PC-3 (cell line): ENCODE measurements at regions of chr2 and their contacts with region 1.

Region 1: DNA sequence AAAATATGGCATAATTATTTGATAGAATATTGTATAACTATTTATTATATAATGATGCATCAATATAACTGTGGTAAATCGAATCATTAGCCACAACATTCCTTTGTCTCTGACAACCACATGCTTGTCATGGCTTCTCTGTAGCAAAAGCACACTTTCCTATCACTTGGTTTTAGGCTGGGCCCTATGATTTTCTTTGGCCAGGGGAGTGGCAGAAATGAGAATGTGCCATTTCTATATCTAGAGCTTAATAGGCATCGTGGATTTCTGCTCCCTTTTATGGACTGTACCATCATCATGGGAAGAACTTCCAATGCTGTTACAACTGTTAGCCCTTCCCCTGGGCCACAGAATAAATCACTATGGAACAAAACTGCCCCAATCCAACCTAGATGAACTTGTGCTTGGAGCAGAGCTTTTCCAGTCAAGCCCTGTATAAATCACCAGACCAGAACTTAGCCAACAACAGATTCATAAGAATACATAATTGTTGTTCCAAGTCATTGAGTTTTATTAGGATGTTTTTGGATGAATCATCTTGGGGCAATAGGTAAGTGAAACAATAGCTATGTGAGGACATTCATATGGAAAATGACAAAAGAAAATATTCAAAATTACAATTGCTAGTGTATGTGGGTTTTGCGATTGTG is 715.8 kb downstream of the ERBB4 start:
- DNase-seq: peak; percentile 76
- ATAC-seq: peak; percentile 93
- H3K4me3 ChIP-seq: no peak overlapping the region
- H3K27ac ChIP-seq: peak overlapping the region; percentile 49
- H3K4me1 ChIP-seq: peaks cover 6% of the 10 kb centered on the region; the same call in 1 of the 2 replicates
- H3K27me3 ChIP-seq: no peaks in the 10 kb centered on the region
- CTCF ChIP-seq: no peak

Region 2: DNA sequence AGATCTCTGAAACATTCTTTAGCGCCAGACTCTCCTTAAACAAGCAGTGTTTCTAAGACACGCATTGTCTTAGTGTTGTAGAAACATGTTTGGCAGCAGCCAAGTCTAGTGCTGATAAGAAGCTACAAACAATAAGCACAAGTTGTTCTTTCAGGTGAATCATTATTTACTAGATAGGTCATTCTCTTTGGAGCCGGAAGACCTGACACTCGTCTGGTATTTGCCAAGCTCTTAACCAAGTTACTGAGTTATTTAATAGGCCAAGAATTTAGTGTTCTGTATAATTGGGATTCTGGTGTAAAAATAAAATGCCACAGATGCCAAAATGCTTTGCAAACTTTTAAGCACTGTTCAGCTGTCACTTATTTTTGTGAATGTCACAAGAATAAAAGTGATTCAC is 414.3 kb before region 1 on chr2:
- CTCF ChIA-PET with region 1: no interaction called
- POLR2A ChIA-PET with region 1: no interaction called
- intact Hi-C with region 1: loop called (anchors 10 kb)
- DNase-seq: peak; percentile 92
- ATAC-seq: peak; percentile 88
- H3K4me3 ChIP-seq: peak overlapping the region; percentile 28; the same call in 1 of the 2 replicates
- H3K27ac ChIP-seq: peak overlapping the region; percentile 86
- H3K4me1 ChIP-seq: peaks cover 32% of the 10 kb centered on the region
- H3K27me3 ChIP-seq: no peaks in the 10 kb centered on the region
- CTCF ChIP-seq: no peak

Region 3: GRCh38 chr2:211837706-211838105 is 14.9 kb after region 1 on chr2:
- CTCF ChIA-PET with region 1: no interaction called
- POLR2A ChIA-PET with region 1: no interaction called
- intact Hi-C with region 1: loop called (anchors 1 kb)
- DNase-seq: peak; percentile 50
- ATAC-seq: peak; percentile 90
- H3K4me3 ChIP-seq: no peak overlapping the region
- H3K27ac ChIP-seq: no peak overlapping the region
- H3K4me1 ChIP-seq: no peaks in the 10 kb centered on the region; the same call in 1 of the 2 replicates
- H3K27me3 ChIP-seq: no peaks in the 10 kb centered on the region
- CTCF ChIP-seq: no peak

Region 4: DNA sequence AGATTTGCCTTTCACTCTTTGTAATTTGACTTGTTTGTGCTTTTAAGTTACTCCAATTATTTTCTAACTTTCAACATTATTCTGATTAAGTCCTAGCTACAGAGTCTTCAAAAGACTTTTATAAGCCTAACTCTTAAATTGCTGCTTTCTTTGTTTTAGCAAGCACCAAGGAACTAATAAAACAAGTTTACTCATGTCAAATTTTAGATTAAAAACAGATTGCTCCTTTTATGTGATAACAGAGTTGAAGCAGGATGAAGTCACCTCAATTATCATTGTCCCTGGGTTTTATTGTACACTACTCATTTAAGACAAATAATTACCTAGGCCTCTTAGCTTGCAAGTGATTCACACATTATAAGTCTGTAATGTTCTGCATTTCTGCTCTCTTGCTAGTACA is 37.4 kb after region 1 on chr2:
- CTCF ChIA-PET with region 1: no interaction called
- POLR2A ChIA-PET with region 1: no interaction called
- intact Hi-C with region 1: loop called (anchors 1 kb)
- DNase-seq: peak; percentile 30
- ATAC-seq: peak; percentile 95
- H3K4me3 ChIP-seq: no peak overlapping the region
- H3K27ac ChIP-seq: no peak overlapping the region
- H3K4me1 ChIP-seq: no peaks in the 10 kb centered on the region
- H3K27me3 ChIP-seq: no peaks in the 10 kb centered on the region
- CTCF ChIP-seq: no peak

Region 5: DNA sequence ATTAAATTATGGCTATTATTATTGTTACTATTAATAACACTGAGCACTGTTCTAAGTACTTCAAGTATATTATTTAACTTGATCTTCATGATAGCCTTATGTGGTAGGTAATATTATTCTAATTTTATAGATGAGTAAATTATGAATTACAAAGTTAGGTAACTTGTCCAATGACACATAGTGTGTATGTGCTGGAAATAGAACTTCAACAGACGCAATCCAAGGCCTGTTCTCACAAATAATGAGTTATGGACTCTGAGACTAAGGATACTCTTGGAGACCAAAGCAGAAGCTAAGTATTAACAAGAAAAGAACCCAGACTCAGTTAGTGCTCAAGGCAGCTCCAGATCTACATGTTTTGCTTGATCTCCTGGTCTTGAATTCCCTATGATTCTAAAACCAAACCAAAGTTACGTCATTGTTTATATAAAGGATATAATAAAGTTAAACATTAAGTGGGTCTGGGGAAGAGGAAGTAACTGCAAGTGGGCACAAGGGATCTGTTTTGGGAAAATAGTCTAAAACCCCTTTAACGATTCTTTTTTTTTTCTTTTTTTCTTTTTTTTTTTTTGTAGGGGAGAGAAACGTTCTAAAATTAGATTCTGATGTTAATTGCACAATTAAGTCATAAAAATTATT is 504.5 kb after region 1 on chr2:
- CTCF ChIA-PET with region 1: no interaction called
- POLR2A ChIA-PET with region 1: no interaction called
- intact Hi-C with region 1: no loop called
- DNase-seq: no peak
- ATAC-seq: no peak
- H3K4me3 ChIP-seq: no peak overlapping the region
- H3K27ac ChIP-seq: no peak overlapping the region
- H3K4me1 ChIP-seq: no peaks in the 10 kb centered on the region; the same call in 1 of the 2 replicates
- H3K27me3 ChIP-seq: no peaks in the 10 kb centered on the region
- CTCF ChIP-seq: no peak